ENCODE measurements at regions of chr17 and their contacts with region 1.

Region 1: DNA sequence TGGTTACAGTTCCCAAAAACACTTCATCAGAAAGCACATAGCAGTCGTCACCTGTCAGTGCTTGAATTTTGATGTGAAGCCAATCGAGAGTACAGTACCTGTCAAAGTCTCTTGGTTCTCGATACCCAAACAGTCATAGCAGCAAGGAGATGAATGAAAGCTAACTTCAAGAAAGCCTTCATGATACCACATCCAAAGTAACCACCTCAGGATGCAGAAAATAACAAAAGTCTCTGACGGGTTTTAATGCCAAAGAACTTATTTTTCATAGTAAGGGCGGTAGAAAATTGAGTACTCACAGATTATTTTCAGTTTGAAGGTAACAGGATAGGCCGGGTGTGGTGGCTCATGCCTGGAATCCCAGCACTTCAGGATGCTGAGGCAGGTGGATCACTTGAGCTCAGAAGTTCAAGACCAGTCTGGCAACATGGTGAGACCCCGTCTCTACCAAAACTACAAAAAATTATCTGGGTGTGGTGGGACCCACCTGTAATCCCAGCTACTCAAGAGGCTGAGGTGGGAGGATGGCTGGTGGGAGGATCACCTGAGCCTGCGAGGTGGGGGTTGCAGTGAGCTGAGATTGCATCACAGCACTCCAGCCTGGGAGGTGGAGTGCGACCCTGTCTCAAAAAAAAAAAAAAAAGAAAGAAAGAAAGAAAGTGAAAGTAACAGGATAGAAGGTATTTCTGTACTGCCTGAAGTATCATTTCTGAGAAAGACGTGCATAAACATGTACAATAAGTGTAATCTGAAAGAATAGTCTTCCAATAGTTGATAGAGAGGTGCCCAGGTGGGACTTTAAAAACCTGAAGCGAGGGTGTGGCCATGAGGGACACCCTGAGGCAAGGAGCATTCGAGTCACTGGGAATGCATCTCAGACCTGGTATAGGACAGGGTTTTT is 15.4 kb downstream of the MFSD11 start:
- DNase-seq: peak; percentile 42
- ATAC-seq: peak; percentile 57
- H3K4me3 Mint-ChIP-seq: peak overlapping the region; percentile 87
- H3K27ac Mint-ChIP-seq: peak overlapping the region; percentile 97
- H3K4me1 Mint-ChIP-seq: peaks cover 30% of the 10 kb centered on the region
- H3K27me3 Mint-ChIP-seq: no peaks in the 10 kb centered on the region

Region 2: DNA sequence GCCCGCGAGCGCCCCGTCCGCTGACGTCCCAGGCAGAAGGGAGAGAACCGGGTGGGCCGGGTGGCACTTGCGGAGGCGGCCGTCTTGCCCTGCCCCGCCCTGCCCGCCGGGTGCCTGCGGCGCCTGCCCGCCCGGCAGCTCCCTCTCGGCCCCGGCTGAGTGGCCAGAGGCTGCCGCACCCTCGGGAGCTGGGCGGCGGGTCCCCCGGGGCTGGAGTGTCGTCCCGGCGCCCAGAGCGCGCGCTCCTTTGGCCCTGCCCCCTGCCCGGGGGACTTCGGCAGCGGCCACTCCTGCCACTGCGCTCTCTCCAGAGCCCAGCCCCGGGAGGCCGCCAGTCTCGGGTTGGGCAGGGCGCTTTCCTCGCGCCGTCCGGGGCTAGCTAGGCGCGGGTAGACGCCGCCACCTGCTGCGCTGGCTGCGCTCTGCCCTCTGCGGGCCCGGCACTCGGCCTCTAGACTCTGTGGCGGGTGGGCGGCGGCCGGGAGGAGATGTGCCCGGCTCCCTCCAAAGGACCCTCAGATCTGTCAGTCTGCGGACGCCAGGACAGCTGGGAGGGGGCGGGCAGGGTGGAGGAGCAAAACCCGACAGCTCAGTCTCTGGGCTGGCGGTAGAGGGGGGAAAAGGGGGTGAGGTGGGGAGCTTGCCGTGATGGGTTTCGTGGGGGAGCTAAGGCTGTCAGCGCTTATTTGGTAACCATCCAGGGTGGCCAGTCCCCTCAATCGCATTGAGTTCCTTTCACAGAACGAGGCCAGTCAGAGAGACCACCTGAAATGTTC is 167.3 kb before region 1 on chr17 and contains the start of gene ST6GALNAC2:
- POLR2A ChIA-PET with region 1: no interaction called
- DNase-seq: peak; percentile 53
- ATAC-seq: peak; percentile 79
- H3K4me3 Mint-ChIP-seq: peak within 1 kb of the TSS; percentile 65
- H3K27ac Mint-ChIP-seq: no peak within 1 kb of the TSS
- H3K4me1 Mint-ChIP-seq: peaks cover 1% of the 10 kb centered on the region
- H3K27me3 Mint-ChIP-seq: peaks cover 74% of the 10 kb centered on the region
- total RNA-seq, gene ST6GALNAC2: 3.4 to 3.9 TPM

Region 3: GRCh38 chr17:76678330-76678729 is 75.0 kb before region 1 on chr17:
- POLR2A ChIA-PET with region 1: no interaction called
- DNase-seq: peak; percentile 60
- ATAC-seq: peak; percentile 89
- H3K4me3 Mint-ChIP-seq: no peak overlapping the region
- H3K27ac Mint-ChIP-seq: no peak overlapping the region
- H3K4me1 Mint-ChIP-seq: peaks cover 9% of the 10 kb centered on the region
- H3K27me3 Mint-ChIP-seq: no peaks in the 10 kb centered on the region

Region 4: DNA sequence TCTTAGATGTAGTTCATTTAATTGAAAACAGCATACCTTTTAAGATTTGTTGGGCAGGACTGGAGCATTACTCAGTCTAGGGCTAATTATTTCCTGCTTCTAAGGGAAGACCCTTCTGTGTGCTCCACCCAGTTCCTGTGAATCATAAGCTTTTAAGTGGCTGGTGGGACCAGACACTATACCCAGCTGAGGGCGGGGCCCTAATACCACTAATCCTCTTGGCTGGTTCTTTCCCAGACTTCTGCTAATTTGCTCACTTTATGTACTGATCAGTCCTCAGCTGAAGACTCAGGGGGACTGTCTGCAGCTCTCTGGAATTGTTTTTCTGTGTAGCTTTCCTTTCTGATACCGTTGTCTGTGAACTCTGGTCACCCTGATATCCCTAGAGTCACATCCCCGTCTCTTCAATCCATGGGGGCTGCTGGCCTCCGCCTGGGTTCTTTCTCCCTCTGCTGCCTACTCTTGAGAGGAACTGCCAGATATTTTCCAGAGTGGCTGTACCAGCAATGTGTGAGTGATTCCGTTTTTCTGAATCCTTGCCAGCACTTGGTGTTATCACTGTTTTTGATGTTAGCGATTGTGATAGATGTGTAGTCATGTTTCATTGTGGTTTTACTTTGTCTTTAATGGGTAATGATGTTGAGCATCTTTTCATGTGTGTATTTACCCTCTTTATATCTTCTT is 19.7 kb after region 1 on chr17:
- POLR2A ChIA-PET with region 1: interaction called, 11 read pairs
- DNase-seq: peak; percentile 40
- ATAC-seq: peak; percentile 100
- H3K4me3 Mint-ChIP-seq: peak overlapping the region; percentile 86
- H3K27ac Mint-ChIP-seq: peak overlapping the region; percentile 92
- H3K4me1 Mint-ChIP-seq: peaks cover 21% of the 10 kb centered on the region
- H3K27me3 Mint-ChIP-seq: no peaks in the 10 kb centered on the region